Transverse colon (tissue), 4 donors: ENCODE measurements at regions of chr10 and their contacts with region 1.

Region 1: GRCh38 chr10:102583435-102584417 is 60.6 kb upstream of the TRIM8 start:
- DNase-seq: peak; percentile 86
- H3K4me3 ChIP-seq: no peak overlapping the region
- H3K27ac ChIP-seq: no peak overlapping the region
- H3K4me1 ChIP-seq: peaks cover 0 to 23% (median 0%) of the 10 kb centered on the region in 4 donors
- H3K27me3 ChIP-seq: no peaks in the 10 kb centered on the region
- CTCF ChIP-seq: peak; percentile 80 to 89 (median 83)
- EP300 ChIP-seq: no peak
- POLR2A ChIP-seq: no peak

Region 2: DNA sequence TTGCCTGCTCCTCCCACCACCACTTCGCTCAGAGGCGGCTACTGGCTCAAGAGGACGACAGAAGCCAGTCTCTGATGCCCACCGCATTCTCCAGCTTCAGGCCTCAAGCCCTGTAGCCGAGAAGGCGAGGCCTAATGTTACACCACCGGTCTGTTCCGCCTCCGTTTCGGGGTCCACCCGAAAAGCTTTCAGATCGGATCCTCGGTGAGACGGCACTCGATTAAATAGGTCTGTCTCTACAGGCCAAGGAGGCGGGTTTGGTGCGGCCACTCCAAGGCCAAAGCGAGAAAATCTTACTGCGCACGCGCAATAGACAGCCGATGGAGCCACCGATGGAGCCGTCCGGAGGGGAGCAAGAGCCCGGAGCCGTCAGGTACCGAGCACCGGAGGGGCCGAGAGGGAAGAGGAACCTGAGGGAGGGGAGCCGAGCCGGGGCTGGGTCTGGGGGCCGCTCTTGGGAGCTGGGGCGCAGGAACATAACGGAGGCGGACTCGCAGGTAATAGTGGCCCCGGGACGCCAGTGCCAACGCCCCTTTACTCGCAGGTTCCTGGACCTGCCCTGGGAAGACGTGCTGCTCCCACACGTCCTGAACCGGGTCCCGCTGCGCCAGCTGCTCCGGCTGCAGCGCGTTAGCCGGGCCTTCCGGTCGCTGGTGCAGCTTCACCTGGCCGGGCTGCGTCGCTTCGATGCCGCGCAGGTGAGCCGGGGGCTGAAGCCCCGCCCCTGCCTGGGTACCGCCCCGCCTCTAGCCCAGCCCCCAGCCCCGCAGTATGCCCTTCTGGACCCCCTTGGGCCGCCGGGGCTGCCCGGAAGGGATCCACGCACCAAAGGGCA is 162.7 kb before region 1 on chr10 and contains the start of gene FBXL15:
- in situ Hi-C with region 1: no loop called
- intact Hi-C with region 1: no loop called
- DNase-seq: peak; percentile 98
- H3K4me3 ChIP-seq: peak within 1 kb of the TSS; percentile 45 to 77 (median 64)
- H3K27ac ChIP-seq: peak within 1 kb of the TSS; percentile 90 to 96 (median 94)
- H3K4me1 ChIP-seq: peaks cover 26 to 35% (median 32%) of the 10 kb centered on the region in 4 donors
- H3K27me3 ChIP-seq: peaks cover 31% of the 10 kb centered on the region
- CTCF ChIP-seq: no peak
- EP300 ChIP-seq: no peak
- POLR2A ChIP-seq: peak; percentile 47
- total RNA-seq, gene FBXL15: 16.7 to 56.3 (median 46.0) TPM

Region 3: DNA sequence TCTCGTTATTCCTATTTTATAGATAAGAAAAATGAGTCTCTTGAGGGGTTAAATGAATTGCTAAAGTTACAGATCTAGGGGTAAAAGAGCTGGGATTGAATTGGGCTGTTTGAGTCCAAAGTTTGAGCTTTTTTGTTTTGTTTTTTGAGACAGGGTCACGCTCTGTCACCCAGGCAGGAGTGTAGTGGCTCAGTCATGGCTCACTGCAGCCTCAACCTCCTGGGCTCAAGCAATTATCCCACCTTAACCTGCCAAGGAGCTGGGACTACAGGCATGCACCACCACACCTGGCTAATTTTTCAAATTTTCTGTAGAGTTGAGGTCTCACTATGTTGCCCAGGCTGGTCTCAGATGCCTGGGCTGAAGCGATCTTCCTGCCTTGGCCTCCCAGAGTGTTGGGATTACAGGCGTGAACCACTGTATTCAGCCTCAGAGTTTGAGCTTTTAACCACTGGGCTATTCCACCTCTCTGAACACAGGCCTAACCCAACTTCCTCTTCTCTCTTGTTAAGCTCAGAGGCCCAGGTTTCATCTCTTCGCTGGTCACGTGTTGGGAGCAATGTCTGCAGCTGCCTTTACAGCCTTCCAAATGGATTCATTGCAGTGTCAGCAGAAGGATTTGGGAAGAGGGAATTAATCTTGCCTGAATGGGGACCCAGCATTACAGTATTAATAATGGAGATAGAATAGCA is 72.0 kb before region 1 on chr10:
- in situ Hi-C with region 1: loop called (anchors 5 to 10 kb)
- intact Hi-C with region 1: loop called (anchors 5 kb)
- DNase-seq: no peak
- H3K4me3 ChIP-seq: no peak overlapping the region
- H3K27ac ChIP-seq: no peak overlapping the region
- H3K4me1 ChIP-seq: no peaks in the 10 kb centered on the region
- H3K27me3 ChIP-seq: no peaks in the 10 kb centered on the region
- CTCF ChIP-seq: no peak
- EP300 ChIP-seq: no peak
- POLR2A ChIP-seq: no peak